CD4-positive, alpha-beta T cell (primary cell): ENCODE measurements at regions of chr10 and their contacts with region 1.

Region 1: GRCh38 chr10:110893559-110894179 is 21.9 kb downstream of the PDCD4 start:
- DNase-seq: peak in 4 of 14 experiments; percentile 10 to 77 (median 74)
- ATAC-seq: peak; percentile 74
- H3K4me3 ChIP-seq: no peak overlapping the region
- H3K4me3 Mint-ChIP-seq: peak overlapping the region; percentile 6
- H3K27ac ChIP-seq: no peak overlapping the region
- H3K27ac Mint-ChIP-seq: peak overlapping the region; percentile 51
- H3K4me1 ChIP-seq: no peaks in the 10 kb centered on the region
- H3K4me1 Mint-ChIP-seq: peaks cover 61% of the 10 kb centered on the region
- H3K27me3 ChIP-seq: no peaks in the 10 kb centered on the region
- H3K27me3 Mint-ChIP-seq: no peaks in the 10 kb centered on the region
- CTCF ChIP-seq: peak; percentile 79

Region 2: DNA sequence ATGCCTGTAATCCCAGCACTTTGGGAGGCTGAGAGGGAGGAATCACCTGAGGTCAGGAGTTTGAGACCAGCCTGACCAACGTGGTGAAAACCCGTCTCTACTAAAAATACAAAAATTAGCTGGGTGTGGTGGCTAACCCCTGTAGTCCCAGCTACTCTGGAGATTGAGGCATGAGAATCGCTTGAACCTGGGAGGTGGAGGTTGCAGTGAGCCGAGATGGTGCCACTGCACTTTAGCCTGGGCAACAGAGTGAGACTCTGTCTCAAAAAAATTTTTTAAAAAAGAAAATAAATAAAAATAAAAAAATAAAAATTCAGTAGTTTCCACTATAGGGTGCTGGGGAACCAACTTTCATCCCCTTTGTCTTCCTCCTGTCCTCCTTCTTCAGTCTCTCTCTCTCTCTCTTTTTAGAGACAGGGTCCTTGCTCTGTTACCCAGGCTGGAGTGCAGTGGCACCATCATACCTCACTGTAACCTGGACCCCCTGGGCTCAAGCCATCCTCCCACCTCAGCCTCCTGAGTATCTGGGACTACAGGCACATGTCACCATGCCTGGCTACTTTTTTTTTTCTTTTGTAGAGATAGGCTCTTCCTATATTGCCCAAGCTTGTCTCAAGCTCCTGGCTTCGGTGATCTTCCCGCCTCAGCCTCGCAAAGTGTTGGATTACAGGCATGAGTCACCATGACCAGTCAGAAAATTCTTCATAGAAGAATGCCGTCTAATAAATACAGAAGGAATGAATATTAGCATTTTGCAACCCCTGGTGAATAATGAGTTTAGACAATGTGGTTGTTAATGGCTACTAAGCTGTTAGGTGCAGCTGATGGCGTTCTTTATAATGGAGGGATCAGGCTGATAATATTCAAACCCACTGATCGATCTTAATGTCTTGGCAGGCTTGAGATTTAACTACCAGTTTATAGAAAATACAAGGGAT is 228.9 kb before region 1 on chr10:
- CTCF ChIA-PET with region 1: no interaction called
- POLR2A ChIA-PET with region 1: no interaction called
- intact Hi-C with region 1: no loop called
- DNase-seq: peak in 1 of 14 experiments; percentile 17
- ATAC-seq: no peak
- H3K4me3 ChIP-seq: no peak overlapping the region
- H3K4me3 Mint-ChIP-seq: no peak overlapping the region
- H3K27ac ChIP-seq: no peak overlapping the region
- H3K27ac Mint-ChIP-seq: no peak overlapping the region
- H3K4me1 ChIP-seq: no peaks in the 10 kb centered on the region
- H3K4me1 Mint-ChIP-seq: no peaks in the 10 kb centered on the region
- H3K27me3 ChIP-seq: no peaks in the 10 kb centered on the region
- H3K27me3 Mint-ChIP-seq: no peaks in the 10 kb centered on the region
- CTCF ChIP-seq: no peak

Region 3: DNA sequence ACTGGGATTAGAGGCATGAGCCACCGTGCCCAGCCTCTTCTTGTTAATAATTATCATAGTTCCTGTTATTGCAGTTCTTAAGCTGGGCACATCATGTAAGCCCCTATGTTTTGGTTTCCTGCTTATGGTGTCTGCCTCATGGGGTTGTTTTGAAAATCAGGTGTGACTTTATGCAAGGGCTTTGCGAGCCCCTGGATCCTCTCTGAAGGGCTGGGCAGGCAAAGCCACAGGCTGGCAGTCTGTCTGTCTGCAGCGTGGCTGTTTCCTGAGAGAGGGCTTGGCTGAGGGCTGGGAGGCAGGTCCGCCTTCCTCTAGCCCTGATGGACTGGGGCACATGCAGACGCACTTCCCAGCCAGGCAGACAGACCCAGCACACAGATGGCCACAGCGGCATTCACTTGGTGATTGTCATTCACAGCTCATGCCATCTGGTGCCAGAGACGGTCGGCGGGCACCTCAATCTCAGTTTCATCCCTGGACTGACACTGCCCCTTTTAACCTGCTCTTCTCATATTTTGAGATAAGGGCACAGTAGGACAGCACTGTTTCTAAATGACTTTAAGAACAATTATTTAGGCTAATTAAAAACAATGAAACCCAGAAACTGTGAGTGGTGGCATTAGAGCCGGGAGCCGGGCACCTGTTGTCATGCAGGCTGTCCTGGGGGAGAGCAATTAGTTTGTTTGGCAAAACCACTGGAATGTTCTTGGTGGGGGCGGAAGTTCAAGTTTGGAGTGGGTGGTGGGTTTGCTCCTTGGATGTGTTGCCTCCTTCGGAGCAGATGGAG is 214.0 kb before region 1 on chr10:
- CTCF ChIA-PET with region 1: no interaction called
- POLR2A ChIA-PET with region 1: no interaction called
- intact Hi-C with region 1: loop called in 1 of 2 experiments (anchors 5 kb)
- DNase-seq: no peak
- ATAC-seq: no peak
- H3K4me3 ChIP-seq: no peak overlapping the region
- H3K4me3 Mint-ChIP-seq: no peak overlapping the region
- H3K27ac ChIP-seq: no peak overlapping the region
- H3K27ac Mint-ChIP-seq: no peak overlapping the region
- H3K4me1 ChIP-seq: no peaks in the 10 kb centered on the region
- H3K4me1 Mint-ChIP-seq: no peaks in the 10 kb centered on the region
- H3K27me3 ChIP-seq: no peaks in the 10 kb centered on the region
- H3K27me3 Mint-ChIP-seq: peaks cover 4% of the 10 kb centered on the region
- CTCF ChIP-seq: no peak

Region 4: GRCh38 chr10:110910138-110910537 is 16.5 kb after region 1 on chr10:
- CTCF ChIA-PET with region 1: interaction called, 5 read pairs
- POLR2A ChIA-PET with region 1: interaction called, 13 read pairs
- intact Hi-C with region 1: no loop called
- DNase-seq: no peak
- ATAC-seq: no peak
- H3K4me3 ChIP-seq: no peak overlapping the region
- H3K4me3 Mint-ChIP-seq: no peak overlapping the region
- H3K27ac ChIP-seq: no peak overlapping the region
- H3K27ac Mint-ChIP-seq: peak overlapping the region; percentile 6
- H3K4me1 ChIP-seq: no peaks in the 10 kb centered on the region
- H3K4me1 Mint-ChIP-seq: peaks cover 18% of the 10 kb centered on the region
- H3K27me3 ChIP-seq: no peaks in the 10 kb centered on the region
- H3K27me3 Mint-ChIP-seq: no peaks in the 10 kb centered on the region
- CTCF ChIP-seq: no peak